Left ventricle myocardium inferior (tissue), 1 donor: ENCODE measurements at regions of chr5 and their contacts with region 1.

Region 1: GRCh38 chr5:39555788-39556187 is 131.0 kb upstream of the DAB2 start:
- DNase-seq: no peak
- H3K4me3 ChIP-seq: no peak overlapping the region
- H3K27ac ChIP-seq: no peak overlapping the region
- H3K4me1 ChIP-seq: no peaks in the 10 kb centered on the region
- H3K27me3 ChIP-seq: no peaks in the 10 kb centered on the region
- CTCF ChIP-seq: no peak

Region 2: DNA sequence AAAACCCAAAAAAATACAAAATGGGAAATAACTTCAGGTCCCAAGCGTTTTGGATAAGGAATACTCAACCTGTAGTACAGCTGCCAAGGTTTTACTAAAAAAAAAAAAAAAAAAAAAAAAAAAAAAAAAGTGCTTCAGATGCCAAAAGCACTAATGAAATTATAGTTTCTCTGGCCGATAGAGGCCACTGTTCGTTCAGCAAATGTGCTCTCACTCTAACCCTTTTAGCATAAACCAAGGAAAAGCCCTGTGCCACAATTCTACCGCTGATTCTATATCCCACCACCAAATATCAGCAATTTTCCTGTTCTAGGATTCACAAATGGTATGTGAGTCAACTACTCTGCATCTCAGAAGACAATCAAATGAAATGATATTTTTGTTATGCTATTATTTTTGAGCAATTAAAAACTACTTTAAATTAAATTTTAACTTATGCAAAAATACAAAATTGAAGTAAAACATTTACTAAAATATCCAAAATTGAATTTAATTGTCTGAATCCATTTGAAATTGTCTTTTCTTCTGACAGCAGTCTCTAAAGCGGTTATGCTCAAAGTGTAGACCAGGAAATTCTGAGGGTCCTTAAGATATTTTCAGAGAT is 561.4 kb before region 1 on chr5:
- intact Hi-C with region 1: loop called (anchors 10 kb)
- DNase-seq: no peak
- H3K4me3 ChIP-seq: no peak overlapping the region
- H3K27ac ChIP-seq: no peak overlapping the region
- H3K4me1 ChIP-seq: peaks cover 30% of the 10 kb centered on the region
- H3K27me3 ChIP-seq: no peaks in the 10 kb centered on the region
- CTCF ChIP-seq: peak; percentile 68